ENCODE measurements at regions of chr15 and their contacts with region 1.

Region 1: DNA sequence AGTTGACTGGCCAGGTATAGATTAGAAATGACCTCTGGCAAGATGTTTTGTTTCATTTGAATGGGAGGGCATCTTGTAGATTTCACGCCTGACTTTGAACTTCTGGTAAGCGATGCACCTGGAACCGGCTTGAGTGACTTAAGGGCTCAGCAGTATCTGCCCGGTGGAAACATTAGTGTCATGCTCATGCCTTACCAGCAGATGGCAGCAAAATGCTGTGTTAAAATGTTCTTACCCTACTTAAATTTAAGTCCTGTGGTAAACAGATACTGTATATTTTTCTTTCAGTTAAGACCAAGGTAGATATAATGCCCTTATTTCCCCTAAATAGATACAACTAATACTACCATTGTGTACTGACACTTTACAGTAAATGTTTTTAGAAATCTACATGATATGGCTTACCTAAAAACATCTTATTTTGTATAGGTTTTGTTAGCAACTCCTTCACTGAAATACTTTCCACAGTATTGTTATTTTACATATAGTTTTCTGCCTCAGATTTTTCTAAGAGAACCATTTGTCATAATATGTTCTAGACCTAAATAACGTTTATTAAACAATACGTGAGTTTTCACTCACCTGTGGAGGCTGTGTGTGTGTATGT is 25.5 kb downstream of the ASB7 start:
- DNase-seq: peak in 1 of 2 donors; percentile 44
- ATAC-seq: peak in 7 of 8 donors; percentile 41 to 81 (median 78)
- H3K4me3 ChIP-seq: no peak overlapping the region
- H3K27ac ChIP-seq: no peak overlapping the region
- H3K4me1 ChIP-seq: peaks cover 0 to 12% (median 0%) of the 10 kb centered on the region in 9 donors
- H3K27me3 ChIP-seq: no peaks in the 10 kb centered on the region
- CTCF ChIP-seq: peak; percentile 69 to 89 (median 86)

Region 2: GRCh38 chr15:100873029-100873677 is 245.3 kb after region 1 on chr15:
- intact Hi-C with region 1: loop called (anchors 1 to 5 kb)
- DNase-seq: peak in 1 of 2 donors; percentile 60
- ATAC-seq: peak in 7 of 8 donors; percentile 61 to 78 (median 66)
- H3K4me3 ChIP-seq: no peak overlapping the region
- H3K27ac ChIP-seq: no peak overlapping the region
- H3K4me1 ChIP-seq: no peaks in the 10 kb centered on the region
- H3K27me3 ChIP-seq: peaks cover 2 to 30% (median 21%) of the 10 kb centered on the region in 7 donors
- CTCF ChIP-seq: peak; percentile 82 to 93 (median 91)

Region 3: DNA sequence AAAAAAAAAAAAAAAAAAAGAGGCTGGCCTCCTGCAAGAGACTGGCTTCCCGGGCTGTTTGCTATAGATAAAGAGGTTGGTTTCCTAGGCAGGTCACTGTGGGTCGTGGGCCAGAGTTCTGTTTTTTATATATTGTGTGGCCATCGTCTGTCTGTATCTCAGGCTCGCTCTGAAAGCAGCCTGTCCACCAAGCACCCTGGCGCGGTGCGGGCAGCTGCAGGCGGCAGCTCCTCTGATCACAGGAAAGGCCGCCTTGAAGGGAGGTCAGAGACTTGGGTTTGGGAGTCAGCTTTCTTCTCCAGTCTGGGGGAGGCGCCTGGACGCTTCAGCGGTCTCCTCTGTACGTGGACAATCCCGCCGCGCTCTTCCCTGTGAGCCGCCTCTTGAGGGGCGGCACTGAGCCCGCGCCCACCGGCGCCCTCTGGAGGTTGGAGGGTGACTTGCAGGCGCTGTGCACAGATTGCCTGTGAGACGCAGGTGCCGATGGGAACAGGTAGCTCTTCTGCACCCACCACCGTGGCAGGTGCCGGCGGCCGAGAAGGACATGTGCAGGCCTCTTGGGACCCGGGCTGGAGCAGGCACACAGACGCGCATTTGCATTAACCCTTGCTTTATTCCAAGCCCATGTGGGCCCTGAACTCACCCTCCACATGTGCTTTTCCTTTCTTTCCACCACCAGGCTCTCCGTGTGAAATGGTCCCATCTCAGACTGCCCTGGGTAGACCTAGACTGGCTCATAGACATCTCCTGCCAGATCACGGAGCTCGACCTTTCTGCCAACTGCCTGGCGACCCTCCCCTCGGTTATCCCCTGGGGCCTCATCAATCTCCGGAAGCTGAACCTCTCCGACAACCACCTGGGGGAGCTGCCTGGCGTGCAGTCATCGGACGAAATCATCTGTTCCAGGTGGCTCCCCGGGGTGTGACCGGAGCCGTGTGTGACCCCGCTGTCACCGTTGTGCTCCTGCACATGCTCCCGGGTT is 380.6 kb after region 1 on chr15:
- intact Hi-C with region 1: loop called (anchors 1 to 5 kb)
- DNase-seq: peak; percentile 77 to 85
- ATAC-seq: peak; percentile 83 to 89 (median 86)
- H3K4me3 ChIP-seq: peak overlapping the region; percentile 23 to 62 (median 54)
- H3K27ac ChIP-seq: peak overlapping the region in 2 of 10 donors; percentile 31 to 48
- H3K4me1 ChIP-seq: peaks cover 2 to 23% (median 17%) of the 10 kb centered on the region in 9 donors
- H3K27me3 ChIP-seq: no peaks in the 10 kb centered on the region
- CTCF ChIP-seq: peak; percentile 95 to 99 (median 98)

Region 4: DNA sequence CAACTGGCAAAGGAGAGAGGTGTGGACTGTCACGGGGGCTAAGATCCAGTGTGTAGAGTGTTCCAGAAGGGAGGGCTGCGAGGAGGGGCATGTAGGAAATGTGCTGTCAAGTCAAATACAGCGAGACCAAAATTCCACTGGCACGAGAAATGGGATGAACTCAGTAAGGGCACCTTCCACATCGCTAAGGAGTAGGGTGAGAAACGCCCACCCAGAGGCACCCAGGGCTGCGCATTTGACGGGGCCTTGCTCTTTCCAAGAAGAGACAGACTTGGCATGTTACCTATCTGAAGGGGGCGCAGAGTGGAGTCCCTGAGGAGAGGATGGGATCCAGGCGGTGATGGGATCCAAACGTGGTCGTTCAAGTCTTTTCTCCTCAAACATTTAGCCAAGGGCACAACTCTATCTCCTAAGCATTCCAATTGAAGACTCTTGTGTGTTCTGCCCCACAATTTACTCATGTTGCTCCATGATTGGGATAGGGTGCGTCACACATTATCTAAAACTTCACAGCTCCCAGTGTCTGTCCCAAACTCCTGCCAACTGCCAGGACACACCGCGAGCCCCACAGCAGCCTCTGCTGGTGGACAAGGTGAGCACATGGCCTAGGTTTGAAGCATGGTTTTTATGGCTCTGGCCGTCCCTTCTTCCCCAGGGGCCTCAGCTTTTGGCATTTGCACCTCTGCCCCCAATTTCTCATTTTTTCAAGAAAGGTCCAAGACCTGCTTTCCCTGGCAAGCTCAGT is 641.8 kb after region 1 on chr15:
- intact Hi-C with region 1: loop called in 1 of 10 experiments (anchors 10 kb)
- DNase-seq: peak; percentile 41 to 43
- ATAC-seq: peak in 7 of 8 donors; percentile 42 to 74 (median 65)
- H3K4me3 ChIP-seq: no peak overlapping the region
- H3K27ac ChIP-seq: peak overlapping the region in 3 of 10 donors; percentile 11 to 51 (median 16)
- H3K4me1 ChIP-seq: peaks cover 0 to 43% (median 16%) of the 10 kb centered on the region in 9 donors
- H3K27me3 ChIP-seq: no peaks in the 10 kb centered on the region
- CTCF ChIP-seq: peak in 8 of 9 donors; percentile 12 to 62 (median 40)

Measured in heart right ventricle (tissue), 16 donors.